ENCODE measurements at regions of chr10 and their contacts with region 1.

Region 1: DNA sequence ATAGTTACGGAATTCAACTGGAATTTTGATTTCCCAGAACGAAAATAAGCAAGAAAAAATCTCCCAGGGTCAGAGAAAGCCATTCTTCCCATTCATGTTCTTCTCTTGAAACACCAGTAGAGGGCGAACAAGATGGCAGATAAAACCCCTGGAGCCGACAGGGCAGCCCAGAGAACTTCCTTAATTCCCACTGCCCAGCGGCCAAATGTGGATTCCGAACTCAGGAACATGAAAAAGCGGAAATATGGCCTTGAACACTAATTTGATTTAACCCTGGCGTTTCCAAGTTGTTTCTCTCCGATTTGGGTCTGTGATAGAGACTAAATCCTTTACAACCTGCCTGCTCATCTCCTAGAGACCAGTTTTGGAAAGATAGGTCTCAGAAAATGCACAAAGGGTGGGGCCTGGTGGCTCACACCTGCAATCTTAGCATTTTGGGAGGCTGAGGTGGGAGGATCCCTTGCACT is 100.7 kb upstream of the WAC start:
- DNase-seq: peak; percentile 80
- H3K4me3 Mint-ChIP-seq: no peak overlapping the region
- H3K27ac Mint-ChIP-seq: no peak overlapping the region
- H3K4me1 Mint-ChIP-seq: peaks cover 8% of the 10 kb centered on the region
- H3K27me3 Mint-ChIP-seq: peaks cover 9% of the 10 kb centered on the region
- CTCF ChIP-seq: peak; percentile 59

Region 2: GRCh38 chr10:28449926-28450325 is 17.7 kb after region 1 on chr10:
- CTCF ChIA-PET with region 1: no interaction called
- POLR2A ChIA-PET with region 1: no interaction called
- intact Hi-C with region 1: no loop called
- DNase-seq: no peak
- H3K4me3 Mint-ChIP-seq: no peak overlapping the region
- H3K27ac Mint-ChIP-seq: no peak overlapping the region
- H3K4me1 Mint-ChIP-seq: no peaks in the 10 kb centered on the region
- H3K27me3 Mint-ChIP-seq: no peaks in the 10 kb centered on the region
- CTCF ChIP-seq: no peak

Region 3: GRCh38 chr10:28533571-28534304 is 101.5 kb after region 1 on chr10:
- CTCF ChIA-PET with region 1: no interaction called
- POLR2A ChIA-PET with region 1: interaction called, 3 read pairs
- intact Hi-C with region 1: loop called (anchors 1 kb)
- DNase-seq: peak; percentile 51
- H3K4me3 Mint-ChIP-seq: peak overlapping the region; percentile 97
- H3K27ac Mint-ChIP-seq: peak overlapping the region; percentile 99
- H3K4me1 Mint-ChIP-seq: peaks cover 41% of the 10 kb centered on the region
- H3K27me3 Mint-ChIP-seq: no peaks in the 10 kb centered on the region
- CTCF ChIP-seq: no peak

Region 4: GRCh38 chr10:28592930-28593329 is 160.7 kb after region 1 on chr10:
- CTCF ChIA-PET with region 1: no interaction called
- POLR2A ChIA-PET with region 1: no interaction called
- intact Hi-C with region 1: loop called (anchors 1 kb)
- DNase-seq: peak; percentile 62
- H3K4me3 Mint-ChIP-seq: peak overlapping the region; percentile 6
- H3K27ac Mint-ChIP-seq: no peak overlapping the region
- H3K4me1 Mint-ChIP-seq: peaks cover 21% of the 10 kb centered on the region
- H3K27me3 Mint-ChIP-seq: no peaks in the 10 kb centered on the region
- CTCF ChIP-seq: no peak